ENCODE measurements at regions of chr1 and their contacts with region 1.

Region 1: GRCh38 chr1:1890506-1891348 is at the start of gene GNB1:
- DNase-seq: peak; percentile 77
- H3K4me3 ChIP-seq: peak within 1 kb of the TSS; percentile 84 to 87
- H3K27ac ChIP-seq: peak within 1 kb of the TSS; percentile 95 to 96
- H3K4me1 ChIP-seq: peaks cover 26% of the 10 kb centered on the region
- H3K27me3 ChIP-seq: no peaks in the 10 kb centered on the region
- CTCF ChIP-seq: no peak
- POLR2A ChIP-seq: peak; percentile 72
- total RNA-seq, gene GNB1: 163 to 233 TPM

Region 2: GRCh38 chr1:1777950-1778662 is 112.6 kb before region 1 on chr1 and contains the start of gene NADK:
- intact Hi-C with region 1: loop called (anchors 5 kb)
- DNase-seq: peak; percentile 37
- H3K4me3 ChIP-seq: peak within 1 kb of the TSS; percentile 81 to 86
- H3K27ac ChIP-seq: peak within 1 kb of the TSS; percentile 81 to 85
- H3K4me1 ChIP-seq: peaks cover 18% of the 10 kb centered on the region
- H3K27me3 ChIP-seq: no peaks in the 10 kb centered on the region
- CTCF ChIP-seq: peak in 1 of 4 experiments; percentile 16
- POLR2A ChIP-seq: peak; percentile 3
- total RNA-seq, gene NADK: 64.5 to 91.1 TPM

Region 3: GRCh38 chr1:1858382-1859086 is 32.2 kb before region 1 on chr1:
- intact Hi-C with region 1: loop called (anchors 5 kb)
- DNase-seq: peak; percentile 87
- H3K4me3 ChIP-seq: no peak overlapping the region
- H3K27ac ChIP-seq: peak overlapping the region; percentile 77 to 80
- H3K4me1 ChIP-seq: peaks cover 20% of the 10 kb centered on the region
- H3K27me3 ChIP-seq: no peaks in the 10 kb centered on the region
- CTCF ChIP-seq: peak; percentile 23 to 62 (median 52)
- POLR2A ChIP-seq: no peak